PC-3 (cell line): ENCODE measurements at regions of chr3 and their contacts with region 1.

Region 1: DNA sequence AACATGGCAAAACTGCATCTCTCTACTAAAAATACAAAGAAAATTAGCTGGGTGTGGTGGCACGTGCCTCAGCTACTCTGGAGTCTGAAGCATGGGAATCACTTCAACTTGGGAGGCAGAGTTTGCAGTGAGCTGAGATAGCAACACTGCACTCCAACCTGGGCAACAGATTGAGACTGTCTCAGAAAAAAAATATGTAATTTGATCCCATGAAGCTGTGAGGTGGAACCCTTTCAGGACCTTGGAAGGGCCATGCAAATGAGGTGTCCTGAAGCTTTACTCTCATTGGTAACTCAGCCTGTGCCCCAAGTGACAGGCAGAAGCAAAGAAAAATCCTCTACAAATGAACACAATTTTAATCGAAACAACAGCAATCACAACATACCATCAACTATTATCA is 84.6 kb upstream of the CDV3 start:
- DNase-seq: peak; percentile 42
- ATAC-seq: peak; percentile 71
- H3K4me3 ChIP-seq: no peak overlapping the region
- H3K27ac ChIP-seq: peak overlapping the region; percentile 31
- H3K4me1 ChIP-seq: peaks cover 15% of the 10 kb centered on the region
- H3K27me3 ChIP-seq: no peaks in the 10 kb centered on the region
- CTCF ChIP-seq: no peak

Region 2: DNA sequence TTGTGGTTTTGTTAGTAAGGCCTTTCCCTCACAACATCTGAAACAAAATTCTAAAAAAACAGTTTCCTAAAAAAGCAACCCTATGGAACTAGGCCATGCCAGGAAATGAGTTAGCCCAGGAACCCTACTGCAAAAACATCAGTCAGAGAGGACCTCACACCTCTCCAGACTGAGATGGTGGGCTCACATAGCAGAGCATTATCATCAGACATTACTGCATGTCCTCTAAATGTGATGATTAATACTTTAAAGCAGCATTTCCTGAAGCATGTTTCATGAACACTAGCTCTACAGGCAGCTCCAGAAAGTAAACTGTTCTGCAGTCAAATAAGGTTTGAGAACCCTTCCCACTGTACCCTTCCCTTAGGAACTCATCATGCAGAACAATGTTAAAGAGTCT is 1753.8 kb before region 1 on chr3:
- CTCF ChIA-PET with region 1: interaction called, 14 read pairs
- POLR2A ChIA-PET with region 1: no interaction called
- intact Hi-C with region 1: no loop called
- DNase-seq: no peak
- ATAC-seq: no peak
- H3K4me3 ChIP-seq: no peak overlapping the region
- H3K27ac ChIP-seq: no peak overlapping the region
- H3K4me1 ChIP-seq: no peaks in the 10 kb centered on the region
- H3K27me3 ChIP-seq: no peaks in the 10 kb centered on the region
- CTCF ChIP-seq: no peak

Region 3: GRCh38 chr3:134336587-134336986 is 847.7 kb after region 1 on chr3:
- CTCF ChIA-PET with region 1: no interaction called
- POLR2A ChIA-PET with region 1: no interaction called
- intact Hi-C with region 1: no loop called
- DNase-seq: no peak
- ATAC-seq: no peak
- H3K4me3 ChIP-seq: no peak overlapping the region
- H3K27ac ChIP-seq: no peak overlapping the region
- H3K4me1 ChIP-seq: peaks cover 8% of the 10 kb centered on the region
- H3K27me3 ChIP-seq: no peaks in the 10 kb centered on the region
- CTCF ChIP-seq: no peak